ENCODE measurements at regions of chr9 and their contacts with region 1.

Region 1: DNA sequence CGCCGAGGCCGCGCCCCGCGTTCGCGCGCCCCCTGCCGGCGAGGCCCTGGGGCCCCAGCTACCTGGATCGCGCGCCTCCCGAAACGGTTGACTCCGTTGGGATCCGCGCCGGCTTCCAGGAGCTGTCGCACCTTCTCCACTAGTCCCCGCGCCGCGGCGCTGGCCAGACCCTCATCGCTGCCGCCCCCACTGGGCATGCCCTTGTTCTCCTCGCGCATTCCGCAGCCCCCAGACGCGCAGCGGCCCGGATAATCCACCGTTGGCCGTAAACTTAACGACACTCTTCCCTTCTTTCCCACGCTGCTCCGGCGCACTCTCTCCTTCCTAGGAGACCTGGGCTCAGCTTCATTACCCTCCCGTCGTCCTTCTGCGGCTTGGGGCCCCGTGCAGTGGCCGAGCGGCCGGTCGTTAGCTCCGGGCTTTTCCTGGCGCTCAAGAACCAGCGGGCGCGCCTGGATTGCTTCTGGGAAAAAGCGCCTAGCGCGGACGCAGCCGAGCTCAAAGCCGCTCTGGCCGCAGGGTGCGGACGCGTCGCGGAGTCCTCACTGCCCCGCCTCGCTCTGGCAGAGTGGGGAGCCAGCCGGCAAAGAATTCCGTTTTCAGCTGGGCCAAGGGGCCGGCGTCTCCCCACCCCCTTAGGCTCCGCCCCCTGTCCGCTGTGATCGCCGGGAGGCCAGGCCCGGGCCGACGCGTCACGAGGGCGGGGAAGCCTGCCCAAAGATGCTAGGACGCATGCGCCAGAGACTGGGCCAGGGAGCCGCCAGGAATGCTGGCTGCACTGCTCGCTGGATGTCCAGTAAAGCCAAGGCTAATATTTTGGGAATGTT is at the start of gene CDKN2B:
- DNase-seq: peak; percentile 96
- ATAC-seq: peak; percentile 100
- total RNA-seq, gene CDKN2B: 3.0 TPM

Region 2: GRCh38 chr9:21862871-21863270 is 146.1 kb before region 1 on chr9:
- intact Hi-C with region 1: no loop called
- DNase-seq: no peak
- ATAC-seq: no peak

Region 3: DNA sequence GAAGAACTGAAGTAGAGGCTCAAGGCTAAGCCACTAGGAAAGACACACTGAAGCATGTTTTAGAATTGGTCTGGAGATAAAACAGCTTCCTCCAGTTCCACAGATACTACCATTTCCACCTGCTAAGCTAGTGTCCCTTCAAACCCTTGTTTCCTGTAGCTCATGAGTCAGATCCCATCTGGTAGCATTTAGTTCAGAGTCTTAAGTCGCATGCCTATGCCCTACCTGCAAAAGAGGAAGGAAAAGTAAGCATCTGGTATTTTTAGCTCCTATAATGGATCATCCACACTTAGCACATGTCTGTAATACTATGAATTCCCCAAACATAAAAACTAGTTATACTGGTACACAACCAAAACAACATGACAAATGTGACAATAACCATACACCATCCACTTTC is 106.8 kb before region 1 on chr9:
- intact Hi-C with region 1: no loop called
- DNase-seq: no peak
- ATAC-seq: no peak

Region 4: DNA sequence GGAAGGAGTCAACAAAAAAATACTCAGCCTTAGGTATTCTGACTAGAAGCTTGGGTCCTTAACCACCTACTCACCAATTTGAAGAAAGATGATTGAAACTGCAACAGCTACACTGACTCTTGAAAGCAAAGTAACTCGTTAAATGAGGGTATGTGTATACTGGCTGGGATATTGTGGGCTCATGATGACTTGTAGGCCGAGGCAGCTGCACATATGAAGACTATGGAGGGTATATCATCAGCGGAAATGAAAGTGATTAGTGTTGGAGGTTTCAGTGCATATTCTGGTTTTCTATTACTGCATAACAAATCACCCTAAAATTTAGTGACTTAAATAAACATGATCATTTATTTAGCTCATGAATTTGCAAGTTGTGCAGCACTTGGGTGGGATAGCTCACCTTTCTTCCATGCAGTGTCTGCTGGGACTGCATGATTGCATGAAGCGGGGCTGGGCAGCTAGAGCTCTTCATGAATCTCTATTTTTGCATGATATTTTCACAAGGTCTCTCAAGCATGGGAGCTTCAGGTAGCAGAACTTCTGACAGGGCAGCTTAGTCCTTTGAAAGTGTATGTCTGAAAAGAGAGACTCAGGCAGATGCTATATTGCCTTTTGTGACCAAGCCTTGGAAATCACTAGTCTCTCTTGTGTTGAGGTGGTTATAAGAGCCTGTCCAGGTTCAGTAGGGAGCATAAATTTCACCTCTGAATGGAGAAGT is 96.2 kb after region 1 on chr9:
- intact Hi-C with region 1: loop called (anchors 10 kb)
- DNase-seq: no peak
- ATAC-seq: no peak

Region 5: DNA sequence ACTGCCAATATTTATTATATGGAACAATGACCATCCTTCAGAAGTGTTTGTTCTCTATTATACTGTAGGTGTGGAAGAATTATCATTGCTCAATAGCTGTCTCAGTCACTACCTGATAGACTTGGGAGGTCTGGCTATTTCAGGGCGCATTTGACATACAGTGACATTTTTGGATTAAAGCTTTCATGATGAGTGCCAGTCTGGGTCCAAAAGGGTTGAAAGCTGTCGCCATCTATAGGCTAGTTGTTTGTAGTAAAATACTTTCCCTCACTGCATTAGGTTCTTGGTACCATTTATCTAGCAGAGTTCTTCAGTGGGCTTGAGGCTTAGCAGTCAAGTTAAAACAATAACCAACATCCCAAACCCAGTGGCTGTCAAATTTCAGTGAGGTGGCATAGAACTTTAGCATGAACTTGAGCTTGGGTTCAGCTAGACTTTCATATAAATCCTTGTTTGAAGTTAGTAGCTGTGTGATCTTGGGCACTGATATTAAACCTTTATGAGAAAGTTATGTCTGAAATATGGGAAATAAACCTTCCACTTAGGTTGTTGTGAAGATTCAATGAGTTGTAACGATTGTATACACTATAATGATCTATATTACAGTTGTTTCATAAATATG is 110.7 kb after region 1 on chr9:
- intact Hi-C with region 1: no loop called
- DNase-seq: no peak
- ATAC-seq: peak; percentile 57